IMR-90 (cell line): ENCODE measurements at regions of chr9 and their contacts with region 1.

Region 1: DNA sequence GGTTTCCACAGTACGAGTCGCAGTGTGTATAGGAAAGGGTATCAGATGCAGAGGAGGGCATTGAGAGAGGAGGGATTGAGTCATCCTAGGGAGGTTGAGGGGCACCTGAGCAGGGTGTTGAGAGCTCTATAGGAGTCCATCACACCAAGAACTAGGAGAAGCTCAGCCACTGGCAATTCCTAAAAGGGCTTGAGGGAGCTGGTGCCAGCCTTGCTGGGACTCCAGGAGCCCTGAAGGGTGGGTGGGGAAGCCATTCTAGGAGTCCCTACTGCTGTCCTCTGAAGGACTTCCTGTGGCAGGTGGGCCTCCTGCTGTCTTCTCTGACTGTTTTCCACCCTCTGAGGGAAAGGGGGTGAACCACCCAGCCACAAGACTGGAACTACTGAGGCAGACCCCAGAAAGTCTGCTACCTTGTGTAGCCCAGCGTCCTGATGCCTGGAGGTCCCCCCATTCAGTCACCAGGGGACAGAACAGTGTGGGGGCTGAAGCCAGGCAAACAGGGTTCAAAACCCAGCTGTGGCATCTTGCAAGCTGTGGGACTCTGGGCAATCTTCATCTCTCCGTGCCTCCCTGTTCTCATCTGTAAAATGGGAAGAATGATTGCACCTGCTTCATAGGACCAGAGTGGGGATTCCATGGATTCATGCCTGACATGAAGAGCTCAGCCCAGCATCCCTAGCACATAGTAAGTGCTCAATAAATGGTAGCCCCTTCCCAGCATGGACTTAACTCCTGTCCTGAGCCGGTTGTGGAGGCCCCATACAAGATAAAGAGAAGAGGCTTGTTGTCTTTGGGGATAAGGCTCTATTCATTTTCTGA is 149.5 kb downstream of the C9orf50 start:
- DNase-seq: no peak
- ATAC-seq: no peak
- H3K4me3 ChIP-seq: no peak overlapping the region
- H3K27ac ChIP-seq: no peak overlapping the region
- H3K4me1 ChIP-seq: peaks cover 4% of the 10 kb centered on the region; the same call in 1 of the 2 replicates
- H3K27me3 ChIP-seq: no peaks in the 10 kb centered on the region
- CTCF ChIP-seq: no peak
- POLR2A ChIP-seq: no peak
- RAD21 ChIP-seq: no peak

Region 2: DNA sequence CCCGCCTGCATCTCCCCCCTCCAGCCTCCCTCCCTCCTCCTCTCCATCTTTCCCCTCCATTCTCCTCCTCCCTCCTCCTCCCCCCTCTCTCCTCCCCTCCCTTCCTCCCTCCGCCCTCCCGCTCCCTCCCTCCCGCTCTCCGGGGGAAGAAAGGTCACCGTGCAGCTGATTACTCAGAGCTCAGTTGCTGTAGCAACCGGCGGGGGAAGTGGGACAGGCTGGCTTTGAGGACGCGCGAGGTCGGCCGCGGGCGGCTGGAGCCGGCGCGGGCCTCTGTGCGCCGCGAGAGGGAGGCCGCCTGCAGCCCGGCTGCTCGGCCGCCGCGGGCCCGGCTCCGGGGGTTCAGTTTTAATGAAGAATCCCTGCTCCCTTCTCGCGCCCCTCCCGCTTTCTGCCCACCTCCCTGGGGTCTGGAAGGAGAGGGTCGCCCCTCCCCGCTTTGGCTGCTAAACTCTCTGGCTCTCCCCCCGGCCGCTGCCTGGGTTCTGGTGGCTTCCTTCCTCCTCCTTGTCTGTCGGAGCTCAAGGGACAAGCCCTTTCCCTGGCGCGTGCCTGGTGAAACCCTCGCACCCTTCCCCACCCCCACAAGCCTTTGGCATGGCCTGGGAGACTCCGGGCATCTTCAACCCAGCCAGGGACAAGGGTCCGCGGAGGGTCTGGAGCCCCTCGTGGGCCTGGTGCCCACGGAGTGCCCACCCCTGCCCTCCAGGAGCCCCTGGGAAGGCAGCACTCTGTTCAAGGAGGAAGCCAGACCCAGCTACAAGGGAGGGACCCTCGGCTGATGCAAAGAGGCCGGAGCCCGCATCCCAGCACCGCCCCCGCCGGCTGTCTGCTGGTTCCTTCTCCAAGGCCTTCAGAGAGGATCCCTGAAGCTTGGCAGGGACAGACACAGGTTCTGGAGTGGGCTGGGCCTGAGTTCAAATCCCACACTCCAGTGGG is 10.8 kb before region 1 on chr9:
- CTCF ChIA-PET with region 1: no interaction called
- POLR2A ChIA-PET with region 1: interaction called, 15 read pairs
- dilution Hi-C with region 1: no loop called
- in situ Hi-C with region 1: no loop called
- intact Hi-C with region 1: no loop called
- DNase-seq: peak; percentile 98
- ATAC-seq: peak; percentile 90
- H3K4me3 ChIP-seq: peak overlapping the region; percentile 25
- H3K27ac ChIP-seq: peak overlapping the region; percentile 99
- H3K4me1 ChIP-seq: peaks cover 36% of the 10 kb centered on the region
- H3K27me3 ChIP-seq: no peaks in the 10 kb centered on the region
- CTCF ChIP-seq: peak; percentile 39
- POLR2A ChIP-seq: peak; percentile 90
- RAD21 ChIP-seq: peak; percentile 47